Right lobe of liver (tissue), 6 donors: ENCODE measurements at regions of chr10 and their contacts with region 1.

Region 1: GRCh38 chr10:128526791-128527375 is 400.7 kb upstream of the MKI67 start:
- DNase-seq: no peak
- ATAC-seq: no peak
- H3K4me3 ChIP-seq: no peak overlapping the region
- H3K27ac ChIP-seq: no peak overlapping the region
- H3K4me1 ChIP-seq: no peaks in the 10 kb centered on the region
- H3K27me3 ChIP-seq: no peaks in the 10 kb centered on the region
- CTCF ChIP-seq: no peak
- POLR2A ChIP-seq: no peak

Region 2: DNA sequence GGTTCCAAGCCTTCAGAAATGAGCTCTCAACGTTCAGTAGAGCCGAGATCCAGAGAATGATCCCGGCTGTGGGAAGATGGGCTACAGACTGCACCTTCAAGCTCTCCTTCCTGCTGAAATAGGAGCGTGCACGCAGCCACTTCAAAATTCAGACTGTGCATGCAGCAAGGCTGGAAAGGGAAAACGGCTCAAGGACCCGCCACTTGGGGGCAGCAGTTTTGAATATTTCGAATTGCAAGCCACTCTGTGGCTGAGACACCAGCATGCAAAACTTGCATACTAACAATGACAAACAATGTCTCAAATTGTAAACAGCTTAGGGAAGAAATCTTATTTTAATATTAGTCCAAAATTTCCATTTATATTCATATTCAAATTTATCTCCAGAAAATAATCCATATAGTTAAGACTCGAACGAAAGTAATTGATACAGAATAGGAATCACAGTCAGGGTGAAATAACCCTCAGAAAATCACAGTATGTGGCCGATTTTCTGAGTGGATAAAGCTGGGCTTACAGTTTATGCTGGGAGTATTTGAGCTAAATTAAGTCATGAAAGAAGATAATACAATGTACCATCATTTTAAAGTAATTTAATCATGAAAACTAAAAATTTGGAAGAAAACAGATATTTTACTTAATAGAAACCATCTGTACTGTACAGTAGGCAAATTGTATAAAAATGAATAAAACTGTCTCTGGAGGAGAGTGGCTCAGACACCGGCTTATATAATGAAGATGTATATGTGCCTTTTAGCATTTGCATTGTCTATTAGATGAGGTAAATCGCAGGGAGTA is 262.8 kb before region 1 on chr10:
- intact Hi-C with region 1: loop called in 1 of 2 experiments (anchors 10 kb)
- DNase-seq: peak in 2 of 3 donors; percentile 64 to 68
- ATAC-seq: peak; percentile 76 to 84 (median 78)
- H3K4me3 ChIP-seq: no peak overlapping the region
- H3K27ac ChIP-seq: no peak overlapping the region
- H3K4me1 ChIP-seq: no peaks in the 10 kb centered on the region
- H3K27me3 ChIP-seq: peaks cover 0 to 4% of the 10 kb centered on the region in 2 donors
- CTCF ChIP-seq: peak; percentile 39 to 77 (median 70)
- POLR2A ChIP-seq: no peak

Region 3: DNA sequence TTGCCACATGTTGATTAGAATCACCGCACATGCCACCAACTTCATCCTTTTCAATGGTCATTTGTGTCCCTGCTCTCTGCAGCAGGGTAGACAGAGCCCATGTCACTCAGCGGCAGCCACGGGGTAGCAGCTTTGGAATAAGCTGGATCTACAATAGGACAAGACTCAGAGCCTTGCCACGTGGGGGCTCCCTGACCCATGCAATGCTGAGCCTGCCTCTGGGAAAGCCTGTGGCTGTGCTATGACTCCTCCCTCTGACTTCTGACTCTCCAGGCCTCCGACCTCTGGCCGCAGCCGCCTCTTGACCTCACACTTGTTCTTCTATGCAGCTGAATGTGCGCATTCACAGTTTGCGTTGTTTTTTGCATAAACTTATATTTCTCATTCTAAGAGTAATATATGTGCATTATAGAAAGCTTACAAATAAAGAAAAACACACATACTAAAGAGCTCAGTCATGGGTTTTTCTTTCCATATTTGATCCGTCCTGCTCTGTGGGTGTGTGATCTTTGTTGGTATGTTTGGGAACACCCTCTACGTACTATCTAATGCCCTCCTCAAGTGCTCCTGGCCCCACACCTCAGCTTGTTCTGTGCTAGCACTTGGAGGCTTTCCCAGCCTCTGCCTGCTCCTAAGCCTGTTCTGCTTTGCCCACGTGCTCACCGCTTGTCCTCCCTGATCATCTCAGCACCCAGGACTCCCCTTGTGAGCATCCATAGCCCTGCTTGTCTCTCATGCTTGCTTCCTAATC is 202.6 kb before region 1 on chr10:
- intact Hi-C with region 1: loop called in 1 of 2 experiments (anchors 10 kb)
- DNase-seq: peak; percentile 71 to 81 (median 77)
- ATAC-seq: peak; percentile 99 to 100 (median 99)
- H3K4me3 ChIP-seq: no peak overlapping the region
- H3K27ac ChIP-seq: no peak overlapping the region
- H3K4me1 ChIP-seq: no peaks in the 10 kb centered on the region
- H3K27me3 ChIP-seq: no peaks in the 10 kb centered on the region
- CTCF ChIP-seq: peak; percentile 14 to 62 (median 37)
- POLR2A ChIP-seq: no peak